ENCODE measurements at regions of chr1 and their contacts with region 1.

Region 1: GRCh38 chr1:101453844-101454243 is 217.0 kb downstream of the S1PR1 start:
- DNase-seq: no peak
- H3K4me3 Mint-ChIP-seq: no peak overlapping the region
- H3K27ac Mint-ChIP-seq: no peak overlapping the region
- H3K4me1 Mint-ChIP-seq: peaks cover 35% of the 10 kb centered on the region
- H3K27me3 Mint-ChIP-seq: peaks cover 7% of the 10 kb centered on the region

Region 2: DNA sequence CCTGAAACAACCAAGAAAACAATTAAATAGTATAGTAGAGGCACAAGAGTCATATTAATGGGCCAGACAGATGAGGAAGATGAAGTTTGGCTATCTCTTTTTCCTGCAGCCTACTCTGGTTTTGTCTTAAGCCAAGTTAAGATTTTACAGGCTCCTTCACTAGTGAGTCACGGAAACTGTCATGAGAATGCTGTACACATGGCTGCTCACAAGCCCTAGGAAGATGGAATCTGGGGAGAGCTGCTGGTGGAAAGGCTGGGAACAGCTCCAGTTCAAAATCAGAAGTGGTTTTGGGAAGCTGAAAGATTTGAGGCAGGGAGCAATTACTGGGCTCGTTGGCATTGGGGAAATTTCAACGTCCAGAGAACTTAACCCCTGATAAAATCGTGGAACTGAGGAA is 263.4 kb before region 1 on chr1:
- CTCF ChIA-PET with region 1: no interaction called
- POLR2A ChIA-PET with region 1: no interaction called
- DNase-seq: no peak
- H3K4me3 Mint-ChIP-seq: no peak overlapping the region
- H3K27ac Mint-ChIP-seq: no peak overlapping the region
- H3K4me1 Mint-ChIP-seq: peaks cover 24% of the 10 kb centered on the region
- H3K27me3 Mint-ChIP-seq: no peaks in the 10 kb centered on the region

Region 3: GRCh38 chr1:101338714-101339430 is 115.0 kb before region 1 on chr1:
- CTCF ChIA-PET with region 1: no interaction called
- POLR2A ChIA-PET with region 1: no interaction called
- DNase-seq: no peak
- H3K4me3 Mint-ChIP-seq: no peak overlapping the region
- H3K27ac Mint-ChIP-seq: no peak overlapping the region
- H3K4me1 Mint-ChIP-seq: peaks cover 17% of the 10 kb centered on the region
- H3K27me3 Mint-ChIP-seq: peaks cover 5% of the 10 kb centered on the region

Region 4: DNA sequence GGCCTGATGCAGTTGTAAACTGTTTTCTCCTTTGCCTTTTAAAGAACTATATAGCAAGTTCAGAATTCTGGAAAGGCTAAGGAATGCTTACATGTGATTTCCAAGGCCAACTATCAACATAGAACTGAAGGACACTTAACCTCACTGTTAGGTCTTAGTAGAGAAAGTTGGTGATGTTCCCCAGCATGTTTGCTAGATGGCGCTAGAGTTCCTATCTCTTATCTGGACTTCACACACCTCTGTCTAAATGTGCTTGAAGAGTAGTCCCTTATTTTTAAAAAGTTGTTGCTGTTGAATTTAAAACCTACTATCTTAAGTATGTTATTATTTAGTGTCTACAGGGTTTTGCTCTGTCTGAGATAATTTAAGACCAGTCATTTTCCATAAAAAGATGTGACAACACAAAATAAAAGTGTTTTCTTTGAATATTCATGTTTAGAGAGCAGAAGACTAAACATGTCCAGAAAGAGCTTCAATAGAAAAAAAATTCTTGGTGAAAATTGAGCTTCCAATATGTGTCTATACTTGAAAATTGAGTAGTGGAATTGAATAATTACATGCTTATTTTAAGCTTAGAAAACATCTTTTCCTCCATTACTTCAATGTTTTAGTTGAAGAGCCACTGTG is 20.3 kb after region 1 on chr1:
- CTCF ChIA-PET with region 1: interaction called, 12 read pairs
- POLR2A ChIA-PET with region 1: no interaction called
- DNase-seq: no peak
- H3K4me3 Mint-ChIP-seq: no peak overlapping the region
- H3K27ac Mint-ChIP-seq: no peak overlapping the region
- H3K4me1 Mint-ChIP-seq: no peaks in the 10 kb centered on the region
- H3K27me3 Mint-ChIP-seq: peaks cover 7% of the 10 kb centered on the region

Measured in activated CD4-positive, alpha-beta memory T cell treated with anti-CD3 and anti-CD28 coated beads, Interleukin-2, amount 10 ng/mL, durations not matched to agents 7 days and 5 days (primary cell).